GM10248 (cell line): ENCODE measurements at regions of chr1 and their contacts with region 1.

Region 1: GRCh38 chr1:21270086-21270689 is 20.1 kb downstream of the ECE1 start:
- DNase-seq: peak; percentile 81
- CTCF ChIP-seq: peak; percentile 98

Region 2: GRCh38 chr1:21189906-21190500 is 80.2 kb before region 1 on chr1:
- CTCF ChIA-PET with region 1: interaction called, 15 read pairs
- POLR2A ChIA-PET with region 1: no interaction called
- DNase-seq: no peak
- CTCF ChIP-seq: no peak

Region 3: DNA sequence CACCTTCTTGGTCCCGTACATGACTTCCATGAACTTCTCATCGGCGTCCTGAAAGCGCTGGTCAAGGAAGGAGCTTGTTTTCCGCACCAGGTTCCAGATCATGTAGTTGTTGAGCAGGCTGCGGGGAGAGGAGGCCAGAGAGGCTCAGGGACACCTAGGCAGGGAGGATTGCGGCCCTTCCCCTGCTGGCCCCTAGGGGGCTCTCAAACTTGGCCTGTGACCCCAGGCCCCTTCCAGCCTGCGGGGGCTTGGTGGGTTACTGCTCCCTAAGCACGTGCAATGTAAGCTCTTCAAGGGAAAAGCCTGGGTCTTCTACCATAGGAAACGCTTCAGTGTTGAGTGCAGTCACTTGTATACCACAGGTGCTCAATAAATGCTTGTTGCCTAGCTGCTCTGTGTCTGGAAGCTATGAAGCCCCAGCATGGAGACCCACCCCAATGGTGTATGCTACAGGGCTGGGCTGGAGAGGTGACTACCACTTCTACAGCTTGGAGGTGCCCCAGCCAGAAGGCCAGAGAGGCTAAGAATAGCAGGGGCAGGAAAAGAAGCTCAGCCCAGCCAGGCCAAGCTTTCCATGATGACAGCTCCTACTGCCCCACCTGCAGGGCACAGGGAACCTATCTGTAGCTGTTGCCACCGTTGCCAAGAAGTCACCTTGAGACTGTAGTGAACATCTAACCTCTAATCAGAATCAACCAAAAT is 25.1 kb before region 1 on chr1:
- CTCF ChIA-PET with region 1: interaction called, 41 read pairs
- POLR2A ChIA-PET with region 1: no interaction called
- DNase-seq: no peak
- CTCF ChIP-seq: peak; percentile 3

Region 4: DNA sequence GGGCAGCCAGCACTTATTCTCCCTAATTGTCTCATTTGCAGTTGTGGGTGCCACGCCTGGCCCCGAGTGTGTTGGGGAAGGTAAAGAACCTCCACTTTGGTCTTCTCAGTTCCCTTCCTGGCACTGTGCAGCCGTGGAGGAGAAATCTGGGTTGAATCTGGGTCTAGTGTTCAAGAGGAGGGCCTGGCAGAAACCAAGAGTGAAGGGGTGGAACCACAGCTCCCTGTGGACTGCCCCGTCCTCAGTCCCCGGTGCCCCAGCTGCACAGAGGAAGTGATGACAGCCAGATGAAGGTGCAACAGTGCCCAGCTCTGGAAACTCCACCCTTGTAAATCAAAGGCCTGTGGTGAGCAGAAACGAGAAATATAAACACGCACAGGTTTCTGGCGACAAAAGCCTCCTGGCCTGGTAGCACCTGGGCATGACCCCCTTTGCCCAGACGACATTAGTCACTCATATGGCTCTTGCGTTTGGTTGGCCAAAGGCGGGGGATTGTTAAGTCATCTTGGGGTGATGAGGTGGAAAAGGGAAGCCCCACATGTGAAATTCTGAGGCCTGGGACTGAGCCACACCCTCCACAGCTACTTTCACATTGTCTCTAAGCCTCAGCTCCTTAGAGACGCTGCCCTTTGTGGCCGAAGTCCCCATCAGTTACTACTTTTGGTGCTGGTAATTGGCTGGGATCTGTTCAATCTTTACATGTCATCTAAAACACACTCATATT is 24.2 kb after region 1 on chr1:
- CTCF ChIA-PET with region 1: interaction called, 161 read pairs
- POLR2A ChIA-PET with region 1: interaction called, 3 read pairs
- DNase-seq: peak; percentile 73
- CTCF ChIP-seq: no peak

Region 5: GRCh38 chr1:21324368-21325141 is 54.4 kb after region 1 on chr1:
- CTCF ChIA-PET with region 1: interaction called, 37 read pairs
- POLR2A ChIA-PET with region 1: no interaction called
- DNase-seq: peak; percentile 76
- CTCF ChIP-seq: no peak

Region 6: DNA sequence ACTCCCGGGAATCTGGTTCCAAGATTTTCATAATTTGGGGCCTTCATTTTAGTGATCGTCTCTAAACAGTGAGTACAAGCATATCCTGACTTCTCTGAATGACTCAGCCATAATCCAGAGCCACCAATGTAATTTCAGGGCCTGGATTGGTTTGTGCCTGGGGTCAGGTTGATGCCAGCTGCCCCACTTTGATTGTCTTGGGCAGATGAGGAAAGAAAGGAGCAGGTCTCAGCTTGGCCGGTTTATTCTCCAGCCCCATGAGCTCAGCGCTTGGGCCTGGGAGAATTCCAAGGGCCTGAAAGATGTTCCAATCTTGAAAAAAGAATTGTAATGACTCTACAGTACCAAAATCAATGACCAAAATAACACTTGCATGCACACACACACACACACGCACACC is 91.3 kb after region 1 on chr1:
- CTCF ChIA-PET with region 1: interaction called, 22 read pairs
- POLR2A ChIA-PET with region 1: no interaction called
- DNase-seq: no peak
- CTCF ChIP-seq: no peak

Region 7: GRCh38 chr1:21534674-21535378 is 264.6 kb after region 1 on chr1:
- CTCF ChIA-PET with region 1: no interaction called
- POLR2A ChIA-PET with region 1: no interaction called
- DNase-seq: peak; percentile 72
- CTCF ChIP-seq: peak; percentile 63